PC-3 (cell line): ENCODE measurements at regions of chr3 and their contacts with region 1.

Region 1: DNA sequence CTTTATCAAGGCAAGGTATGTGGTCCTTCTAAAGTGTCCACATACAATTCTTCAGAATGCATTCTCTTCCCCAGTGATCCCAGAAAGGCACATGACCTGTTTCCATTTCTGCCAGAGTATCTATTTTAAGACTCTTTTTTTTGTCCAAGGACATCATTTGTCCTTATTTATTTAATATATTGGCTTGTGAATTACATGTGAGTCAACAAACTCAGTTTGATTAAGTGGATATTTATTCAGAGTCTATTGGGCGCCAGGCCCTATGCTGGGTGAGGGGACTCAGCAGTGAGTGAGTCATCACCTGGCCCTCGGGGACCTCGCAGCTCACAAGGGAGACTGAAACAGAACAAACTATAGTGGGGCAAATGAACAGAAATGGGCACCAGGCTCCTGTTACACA is 136.8 kb downstream of the SNRK start:
- DNase-seq: peak; percentile 71
- ATAC-seq: peak; percentile 80
- H3K4me3 ChIP-seq: no peak overlapping the region
- H3K27ac ChIP-seq: peak overlapping the region; percentile 62
- H3K4me1 ChIP-seq: peaks cover 33% of the 10 kb centered on the region
- H3K27me3 ChIP-seq: no peaks in the 10 kb centered on the region
- CTCF ChIP-seq: no peak

Region 2: DNA sequence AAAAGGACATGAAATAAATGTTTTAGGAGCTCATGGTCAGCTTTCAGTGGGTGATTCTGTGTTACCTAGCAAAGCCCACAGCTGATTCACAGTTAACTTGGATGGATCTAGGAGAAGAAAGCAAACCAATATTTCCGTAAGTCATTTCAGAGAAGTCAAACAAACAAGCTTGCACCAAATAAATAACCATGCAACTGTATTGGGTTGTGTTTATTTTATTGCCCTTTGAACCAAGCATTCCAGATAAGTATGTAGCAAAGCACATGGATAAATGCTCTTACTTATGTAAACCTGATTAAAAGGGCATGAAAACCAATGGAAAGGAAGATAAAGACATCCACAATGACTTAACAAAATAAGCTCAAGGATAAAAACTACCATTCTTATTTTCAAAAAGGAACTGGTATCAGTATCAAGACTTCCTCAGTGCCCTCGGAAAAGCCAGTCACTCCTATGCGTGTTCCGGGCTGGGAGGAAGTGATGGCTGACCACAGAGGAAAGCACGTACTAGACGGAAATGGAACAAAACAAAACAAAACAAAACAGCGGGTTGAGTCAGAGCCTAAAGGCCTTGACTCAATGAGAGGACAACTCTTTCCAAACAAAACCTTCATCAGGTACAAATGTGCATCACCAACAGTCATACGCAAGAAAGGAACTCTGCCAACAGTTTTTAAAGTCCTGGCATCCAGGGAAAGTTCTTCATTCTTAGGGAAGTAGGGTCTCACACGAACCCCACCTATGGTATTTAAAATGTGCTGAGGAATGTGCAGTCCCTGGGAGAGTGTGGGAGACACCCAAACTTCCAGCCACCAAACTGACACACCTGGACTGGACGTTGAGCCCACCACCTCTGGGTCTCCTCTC is 33.5 kb before region 1 on chr3:
- CTCF ChIA-PET with region 1: interaction called, 12 read pairs
- POLR2A ChIA-PET with region 1: interaction called, 9 read pairs
- intact Hi-C with region 1: loop called (anchors 2 kb)
- DNase-seq: peak; percentile 97
- ATAC-seq: peak; percentile 95
- H3K4me3 ChIP-seq: peak overlapping the region; percentile 31; the same call in 1 of the 2 replicates
- H3K27ac ChIP-seq: peak overlapping the region; percentile 96
- H3K4me1 ChIP-seq: peaks cover 28% of the 10 kb centered on the region
- H3K27me3 ChIP-seq: no peaks in the 10 kb centered on the region
- CTCF ChIP-seq: no peak

Region 3: GRCh38 chr3:43559963-43560362 is 136.8 kb after region 1 on chr3:
- CTCF ChIA-PET with region 1: no interaction called
- POLR2A ChIA-PET with region 1: no interaction called
- intact Hi-C with region 1: no loop called
- DNase-seq: peak; percentile 52
- ATAC-seq: peak; percentile 98
- H3K4me3 ChIP-seq: no peak overlapping the region
- H3K27ac ChIP-seq: peak overlapping the region; percentile 34
- H3K4me1 ChIP-seq: peaks cover 15% of the 10 kb centered on the region
- H3K27me3 ChIP-seq: no peaks in the 10 kb centered on the region
- CTCF ChIP-seq: peak; percentile 51